Activated B cell treated with CpG ODN at 0.5 μM for 24 hours (primary cell): ENCODE measurements at regions of chr9 and their contacts with region 1.

Region 1: GRCh38 chr9:105259731-105260612 is 15.5 kb downstream of the SLC44A1 start:
- DNase-seq: no peak
- ATAC-seq: no peak
- H3K4me3 Mint-ChIP-seq: no peak overlapping the region
- H3K27ac Mint-ChIP-seq: no peak overlapping the region
- H3K4me1 Mint-ChIP-seq: peaks cover 20% of the 10 kb centered on the region
- H3K27me3 Mint-ChIP-seq: no peaks in the 10 kb centered on the region
- CTCF ChIP-seq: no peak

Region 2: DNA sequence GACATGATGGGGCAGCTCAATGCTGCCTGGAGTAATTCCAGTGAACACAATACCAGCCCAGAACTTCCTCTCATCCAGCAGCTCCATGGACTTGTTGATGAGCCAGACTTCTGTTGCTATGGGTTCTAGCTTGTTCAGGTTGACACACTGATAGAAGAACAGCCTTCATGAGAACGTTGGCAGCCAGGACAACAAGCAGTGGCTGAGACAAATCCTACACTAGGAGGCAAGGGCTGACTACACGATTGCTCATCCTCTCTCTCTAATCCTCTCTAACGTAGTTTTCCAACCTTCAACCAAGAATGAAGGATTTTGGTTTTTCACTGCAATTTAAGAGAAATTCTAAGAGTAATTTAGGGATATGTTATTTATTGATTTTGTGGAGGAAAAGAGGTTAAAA is 428.3 kb before region 1 on chr9:
- CTCF ChIA-PET with region 1: no interaction called
- POLR2A ChIA-PET with region 1: interaction called, 10 read pairs
- intact Hi-C with region 1: no loop called
- DNase-seq: no peak
- ATAC-seq: no peak
- H3K4me3 Mint-ChIP-seq: no peak overlapping the region
- H3K27ac Mint-ChIP-seq: no peak overlapping the region
- H3K4me1 Mint-ChIP-seq: no peaks in the 10 kb centered on the region
- H3K27me3 Mint-ChIP-seq: no peaks in the 10 kb centered on the region
- CTCF ChIP-seq: no peak

Region 3: DNA sequence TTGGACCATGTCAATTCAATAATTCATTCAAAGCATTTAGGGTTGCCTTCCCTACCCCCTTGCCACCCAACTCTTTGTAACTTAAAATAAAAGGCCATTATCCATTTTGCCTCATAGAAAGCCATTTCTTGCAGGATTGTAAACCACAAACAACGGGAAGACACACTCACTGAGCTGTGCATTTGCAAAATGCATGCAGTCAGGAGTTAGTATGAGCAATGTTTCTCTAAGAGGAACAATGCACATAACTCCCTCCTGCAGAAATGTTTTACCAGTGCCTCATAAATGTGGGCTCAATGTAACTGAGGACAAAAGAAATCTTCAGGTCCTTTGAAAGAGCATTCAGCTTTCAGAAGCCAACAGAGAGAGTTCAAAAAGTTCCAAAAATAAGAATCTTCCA is 233.5 kb before region 1 on chr9:
- CTCF ChIA-PET with region 1: no interaction called
- POLR2A ChIA-PET with region 1: no interaction called
- intact Hi-C with region 1: no loop called
- DNase-seq: no peak
- ATAC-seq: no peak
- H3K4me3 Mint-ChIP-seq: no peak overlapping the region
- H3K27ac Mint-ChIP-seq: no peak overlapping the region
- H3K4me1 Mint-ChIP-seq: no peaks in the 10 kb centered on the region
- H3K27me3 Mint-ChIP-seq: peaks cover 3% of the 10 kb centered on the region
- CTCF ChIP-seq: no peak

Region 4: GRCh38 chr9:105318729-105319191 is 58.8 kb after region 1 on chr9:
- CTCF ChIA-PET with region 1: no interaction called
- POLR2A ChIA-PET with region 1: no interaction called
- intact Hi-C with region 1: no loop called
- DNase-seq: no peak
- ATAC-seq: peak; percentile 50
- H3K4me3 Mint-ChIP-seq: no peak overlapping the region
- H3K27ac Mint-ChIP-seq: no peak overlapping the region
- H3K4me1 Mint-ChIP-seq: peaks cover 12% of the 10 kb centered on the region
- H3K27me3 Mint-ChIP-seq: no peaks in the 10 kb centered on the region
- CTCF ChIP-seq: no peak

Region 5: DNA sequence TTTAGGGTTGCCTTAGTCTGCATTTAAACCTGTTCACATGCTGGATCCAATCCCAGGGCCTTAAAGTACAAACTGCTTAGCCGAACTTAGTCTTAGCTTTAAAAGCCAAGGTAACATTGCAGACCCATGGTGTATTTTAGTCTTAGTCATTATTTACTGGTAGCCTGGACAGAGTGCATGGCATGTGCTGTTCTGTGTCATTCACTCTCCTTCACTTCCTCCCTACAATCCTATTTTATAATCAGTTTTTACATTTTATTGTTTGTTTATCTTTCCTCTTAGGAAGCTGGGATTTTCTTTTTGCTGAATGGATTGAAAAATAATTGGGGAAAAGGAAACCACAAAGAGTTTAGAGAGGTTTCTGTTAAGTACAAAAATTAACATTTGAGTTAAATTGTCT is 372.8 kb after region 1 on chr9:
- CTCF ChIA-PET with region 1: no interaction called
- POLR2A ChIA-PET with region 1: no interaction called
- intact Hi-C with region 1: no loop called
- DNase-seq: no peak
- ATAC-seq: no peak
- H3K4me3 Mint-ChIP-seq: no peak overlapping the region
- H3K27ac Mint-ChIP-seq: no peak overlapping the region
- H3K4me1 Mint-ChIP-seq: no peaks in the 10 kb centered on the region
- H3K27me3 Mint-ChIP-seq: no peaks in the 10 kb centered on the region
- CTCF ChIP-seq: no peak